ENCODE measurements at regions of chr18 and their contacts with region 1.

Region 1: GRCh38 chr18:25351777-25352628 is at the start of gene ZNF521:
- DNase-seq: peak; percentile 90
- ATAC-seq: peak; percentile 80
- total RNA-seq, gene ZNF521: 24.5 TPM

Region 2: DNA sequence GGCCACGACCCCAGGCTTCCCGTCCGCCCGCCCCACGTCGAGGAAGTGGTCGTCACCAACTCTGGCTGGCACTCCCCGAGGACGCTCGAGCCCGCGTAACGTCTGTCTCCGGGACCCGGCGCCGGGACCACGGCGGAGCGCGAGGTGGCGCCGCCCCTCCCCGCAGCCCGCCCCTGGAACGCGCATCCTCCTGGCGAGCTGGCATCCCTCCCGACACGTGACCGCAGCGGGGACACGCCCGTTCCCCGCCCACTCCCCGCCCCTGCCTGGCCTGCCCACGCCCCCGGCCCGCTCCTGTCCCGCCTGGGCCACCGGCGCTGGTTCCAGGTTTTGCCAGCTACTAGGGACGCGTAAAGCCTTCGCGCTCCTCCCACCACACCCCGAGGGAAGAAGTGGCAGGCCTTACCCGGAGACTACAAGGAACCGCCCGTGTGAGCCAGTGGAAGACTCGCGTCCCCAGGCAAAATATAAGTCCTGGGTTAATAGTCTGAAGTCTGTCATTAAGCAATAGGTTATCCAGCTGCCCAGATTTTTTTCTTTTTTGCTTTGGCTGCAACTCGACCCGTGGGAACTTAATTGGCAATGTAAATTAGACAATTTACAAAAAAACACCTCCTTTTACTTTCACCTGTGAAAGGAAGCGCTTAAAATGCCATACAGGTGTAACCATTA is 954.2 kb before region 1 on chr18 and contains the start of gene OSBPL1A:
- intact Hi-C with region 1: loop called (anchors 10 kb)
- DNase-seq: peak; percentile 96
- ATAC-seq: peak; percentile 99
- total RNA-seq, gene OSBPL1A: 79.9 TPM

Region 3: DNA sequence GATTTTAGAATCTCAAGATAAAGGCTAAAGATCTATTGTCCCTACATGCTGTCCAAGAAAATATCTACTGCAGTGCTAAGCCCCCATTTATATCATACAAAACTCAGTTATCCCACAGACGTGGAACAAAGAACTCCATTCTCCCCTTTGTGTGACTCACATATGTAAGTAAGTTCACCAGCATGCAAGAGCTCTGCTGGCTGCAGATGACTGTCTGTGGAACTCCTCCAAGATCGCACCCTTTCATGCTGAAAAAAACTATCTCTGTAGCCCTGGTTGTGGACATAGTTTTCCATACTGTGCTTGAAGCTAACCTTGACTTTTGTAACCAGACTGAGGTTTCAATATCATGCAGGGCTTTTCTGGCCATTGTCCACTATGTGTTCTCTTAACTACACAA is 207.2 kb before region 1 on chr18:
- intact Hi-C with region 1: loop called (anchors 5 kb)
- DNase-seq: no peak
- ATAC-seq: peak; percentile 77

Measured in Right ventricle myocardium superior (tissue), 1 donor.